Caco-2 (cell line): ENCODE measurements at regions of chr10 and their contacts with region 1.

Region 1: DNA sequence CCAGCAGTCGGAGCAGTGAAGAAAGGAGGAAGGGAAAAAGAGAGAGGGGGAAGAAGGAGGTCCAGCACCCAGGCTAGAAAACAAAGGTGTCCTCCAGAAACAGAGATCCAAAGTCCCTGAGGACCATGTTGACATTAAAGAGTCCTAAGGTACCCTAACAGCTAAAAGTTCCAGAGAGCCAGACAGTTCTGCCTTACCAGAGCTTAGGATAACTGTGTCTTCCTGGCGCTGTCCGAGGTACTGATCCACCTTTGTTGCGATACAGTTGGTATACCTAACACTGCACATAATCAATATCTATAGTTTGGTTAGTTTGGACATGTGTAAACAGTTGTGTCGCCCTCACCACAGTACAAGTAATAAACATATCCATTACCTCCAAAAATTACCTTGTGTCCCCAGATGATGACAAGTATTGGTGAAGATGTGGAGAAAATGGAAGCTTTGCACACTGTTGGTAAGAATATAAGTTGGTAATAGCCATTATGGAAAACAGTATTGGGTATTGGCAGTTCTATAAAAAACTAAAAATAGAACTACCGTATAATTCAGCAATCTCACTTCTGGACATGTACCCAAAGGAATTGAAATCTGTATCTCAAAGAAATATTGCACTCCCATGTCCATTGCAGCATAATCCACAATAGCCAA is 59.8 kb downstream of the GRID1 start:
- DNase-seq: peak in 1 of 2 experiments; percentile 56
- H3K4me3 ChIP-seq: no peak overlapping the region
- H3K4me3 Mint-ChIP-seq: no peak overlapping the region
- H3K27ac Mint-ChIP-seq: no peak overlapping the region
- H3K4me1 ChIP-seq: no peaks in the 10 kb centered on the region
- H3K4me1 Mint-ChIP-seq: no peaks in the 10 kb centered on the region
- H3K27me3 ChIP-seq: no peaks in the 10 kb centered on the region
- H3K27me3 Mint-ChIP-seq: peaks cover 15% of the 10 kb centered on the region
- CTCF ChIP-seq: no peak

Region 2: DNA sequence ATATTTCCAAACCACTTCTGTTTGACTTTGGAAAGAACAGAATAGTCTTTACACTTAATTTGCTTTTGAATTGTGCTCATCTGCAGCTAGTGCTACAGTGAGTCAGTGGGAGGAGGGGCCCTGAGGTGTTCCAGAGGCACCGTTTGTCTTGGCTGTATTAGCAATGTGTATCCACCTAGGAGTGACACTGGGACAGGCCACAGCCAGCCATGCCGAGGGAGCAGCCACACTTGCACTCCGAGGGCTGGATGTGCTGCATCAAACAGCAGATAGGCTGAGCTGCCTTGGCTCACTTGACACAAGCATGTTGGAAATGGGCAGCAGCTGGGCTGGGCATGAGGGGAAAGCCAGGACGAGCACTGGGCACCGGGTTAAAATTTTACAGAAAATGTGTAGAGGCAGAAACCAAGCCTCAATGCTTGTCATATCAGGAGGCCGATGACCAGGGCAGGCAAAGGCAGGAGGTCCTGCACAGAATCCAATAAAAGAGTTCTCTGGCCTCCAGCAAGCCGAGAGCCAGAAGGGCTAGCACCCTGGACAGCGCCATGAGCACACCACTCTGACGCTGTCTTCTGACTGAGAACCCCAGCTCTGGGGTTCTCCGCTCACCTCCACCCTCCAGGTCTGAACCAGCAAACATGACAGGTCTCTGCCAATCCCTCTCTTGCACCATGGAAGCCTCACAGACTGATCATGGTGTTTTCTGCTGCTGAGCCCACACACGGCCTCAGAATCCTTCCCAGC is 103.4 kb before region 1 on chr10:
- CTCF ChIA-PET with region 1: no interaction called
- POLR2A ChIA-PET with region 1: no interaction called
- intact Hi-C with region 1: loop called (anchors 5 kb)
- DNase-seq: peak; percentile 54 to 71
- H3K4me3 ChIP-seq: no peak overlapping the region
- H3K4me3 Mint-ChIP-seq: no peak overlapping the region
- H3K27ac Mint-ChIP-seq: no peak overlapping the region
- H3K4me1 ChIP-seq: no peaks in the 10 kb centered on the region
- H3K4me1 Mint-ChIP-seq: no peaks in the 10 kb centered on the region
- H3K27me3 ChIP-seq: no peaks in the 10 kb centered on the region
- H3K27me3 Mint-ChIP-seq: peaks cover 10% of the 10 kb centered on the region
- CTCF ChIP-seq: no peak

Region 3: DNA sequence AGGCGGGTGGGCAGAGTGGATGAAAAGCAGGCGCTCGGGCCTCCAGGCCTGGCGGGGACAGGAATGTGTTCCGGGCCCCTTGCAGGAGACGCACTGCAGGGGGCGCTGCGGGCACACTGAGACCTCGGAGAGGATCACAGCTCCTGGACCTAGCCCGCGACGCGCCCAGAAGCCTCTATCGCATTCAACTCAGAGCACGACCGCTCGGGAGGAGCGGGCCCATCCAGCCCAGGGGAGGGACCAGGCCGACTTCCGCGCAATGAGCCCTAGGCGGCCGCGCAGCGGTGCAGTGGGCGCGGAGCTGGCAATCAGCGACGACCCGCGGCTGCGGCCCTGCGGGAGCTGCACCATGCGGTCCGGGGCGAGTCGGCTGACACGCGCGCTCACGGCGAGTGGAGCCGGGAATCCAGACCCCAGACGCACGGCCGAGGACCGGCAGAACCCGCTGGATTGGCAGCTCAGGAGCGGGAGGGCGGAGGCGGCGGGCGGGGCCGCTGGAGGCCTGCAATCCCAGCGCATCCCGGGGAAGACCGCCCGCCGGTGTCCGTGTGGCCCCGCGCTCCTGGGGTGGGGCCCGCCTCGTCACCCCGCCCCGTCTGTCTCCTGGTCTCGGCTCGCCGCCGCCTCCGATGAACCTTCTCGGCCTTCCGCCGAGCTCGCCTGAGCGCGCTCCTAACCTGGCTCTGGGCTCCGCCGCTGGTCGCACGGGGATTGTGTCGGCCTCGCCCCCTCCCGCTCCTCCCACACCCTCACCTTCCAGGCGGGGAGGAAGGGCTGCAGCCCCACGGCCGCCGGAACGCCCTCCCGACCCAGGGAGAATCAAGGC is 93.3 kb after region 1 on chr10:
- CTCF ChIA-PET with region 1: no interaction called
- POLR2A ChIA-PET with region 1: no interaction called
- intact Hi-C with region 1: no loop called
- DNase-seq: peak; percentile 95 to 97
- H3K4me3 ChIP-seq: peak overlapping the region; percentile 57
- H3K4me3 Mint-ChIP-seq: peak overlapping the region; percentile 78
- H3K27ac Mint-ChIP-seq: no peak overlapping the region
- H3K4me1 ChIP-seq: peaks cover 4% of the 10 kb centered on the region
- H3K4me1 Mint-ChIP-seq: peaks cover 18% of the 10 kb centered on the region
- H3K27me3 ChIP-seq: no peaks in the 10 kb centered on the region
- H3K27me3 Mint-ChIP-seq: peaks cover 9% of the 10 kb centered on the region
- CTCF ChIP-seq: peak; percentile 92 to 96